Posterior vena cava (tissue), 2 donors: ENCODE measurements at regions of chr11 and their contacts with region 1.

Region 1: GRCh38 chr11:126310228-126310991 is 6.5 kb downstream of the DCPS start:
- DNase-seq: peak; percentile 88

Region 2: DNA sequence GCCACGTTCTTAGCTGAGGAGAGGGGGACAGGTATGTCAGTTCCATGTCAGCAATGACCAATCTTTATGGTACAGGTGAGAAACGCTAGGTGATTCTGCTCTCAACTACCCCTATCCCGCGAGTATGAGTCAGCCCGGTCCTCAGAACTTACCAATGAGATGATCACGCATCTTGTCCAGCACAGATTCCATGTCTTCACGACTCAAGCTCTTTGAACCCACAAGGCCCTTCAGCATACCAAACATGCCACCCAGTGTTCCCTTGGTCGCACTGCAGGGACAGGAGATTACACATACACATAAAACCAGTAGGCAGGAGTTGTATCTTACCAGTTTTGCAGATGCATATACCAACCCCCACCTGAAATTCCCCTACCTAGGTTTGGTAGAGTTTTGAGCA is 44.6 kb before region 1 on chr11:
- intact Hi-C with region 1: no loop called
- DNase-seq: no peak

Region 3: GRCh38 chr11:126280595-126280994 is 29.8 kb before region 1 on chr11:
- intact Hi-C with region 1: no loop called
- DNase-seq: no peak

Region 4: DNA sequence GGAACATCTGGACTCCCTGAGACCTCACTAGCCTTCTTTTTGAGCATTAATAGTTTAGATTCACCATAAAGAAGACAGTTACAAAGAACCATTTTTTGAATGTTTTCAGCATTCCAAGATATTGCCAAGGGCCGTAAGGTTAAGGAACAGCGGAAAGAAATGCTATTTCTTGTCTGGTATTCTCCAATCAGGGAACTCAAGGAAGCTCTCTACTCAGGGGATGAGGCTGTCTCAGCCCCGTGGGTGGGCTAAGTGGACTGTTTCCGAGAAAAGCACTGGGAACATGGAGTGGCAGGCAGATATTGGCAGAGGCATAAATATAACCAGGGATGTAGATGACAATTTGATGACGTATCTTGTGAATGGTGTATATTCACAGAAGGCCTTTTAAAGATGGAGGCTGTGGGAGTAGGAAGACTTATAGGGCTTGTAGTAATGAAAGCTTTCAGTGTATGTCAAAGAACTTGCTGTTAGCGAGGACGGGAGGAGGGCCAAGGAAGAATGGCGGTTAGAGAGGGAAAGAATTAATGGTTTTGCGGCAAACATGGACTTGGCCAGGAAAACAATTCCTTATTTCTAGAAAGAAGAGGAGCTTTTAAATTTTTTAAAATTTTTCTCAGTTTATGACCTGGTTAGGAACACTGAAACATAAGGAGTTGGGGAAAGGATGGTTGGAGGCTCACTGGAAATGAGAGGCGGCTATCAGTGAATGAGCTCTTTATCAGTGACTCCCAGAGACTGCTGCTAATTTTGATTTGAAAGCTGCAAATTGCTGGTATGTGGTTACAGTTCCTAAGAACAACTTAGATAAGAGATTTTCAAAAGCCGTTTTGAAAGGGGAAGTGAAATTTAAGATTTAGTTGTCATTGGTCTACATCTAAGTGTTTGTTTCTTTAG is 109.6 kb after region 1 on chr11:
- intact Hi-C with region 1: loop called in 1 of 2 experiments (anchors 5 kb)
- DNase-seq: no peak

Region 5: GRCh38 chr11:126480410-126481302 is 170.2 kb after region 1 on chr11:
- intact Hi-C with region 1: loop called (anchors 2 kb)
- DNase-seq: peak; percentile 93

Region 6: DNA sequence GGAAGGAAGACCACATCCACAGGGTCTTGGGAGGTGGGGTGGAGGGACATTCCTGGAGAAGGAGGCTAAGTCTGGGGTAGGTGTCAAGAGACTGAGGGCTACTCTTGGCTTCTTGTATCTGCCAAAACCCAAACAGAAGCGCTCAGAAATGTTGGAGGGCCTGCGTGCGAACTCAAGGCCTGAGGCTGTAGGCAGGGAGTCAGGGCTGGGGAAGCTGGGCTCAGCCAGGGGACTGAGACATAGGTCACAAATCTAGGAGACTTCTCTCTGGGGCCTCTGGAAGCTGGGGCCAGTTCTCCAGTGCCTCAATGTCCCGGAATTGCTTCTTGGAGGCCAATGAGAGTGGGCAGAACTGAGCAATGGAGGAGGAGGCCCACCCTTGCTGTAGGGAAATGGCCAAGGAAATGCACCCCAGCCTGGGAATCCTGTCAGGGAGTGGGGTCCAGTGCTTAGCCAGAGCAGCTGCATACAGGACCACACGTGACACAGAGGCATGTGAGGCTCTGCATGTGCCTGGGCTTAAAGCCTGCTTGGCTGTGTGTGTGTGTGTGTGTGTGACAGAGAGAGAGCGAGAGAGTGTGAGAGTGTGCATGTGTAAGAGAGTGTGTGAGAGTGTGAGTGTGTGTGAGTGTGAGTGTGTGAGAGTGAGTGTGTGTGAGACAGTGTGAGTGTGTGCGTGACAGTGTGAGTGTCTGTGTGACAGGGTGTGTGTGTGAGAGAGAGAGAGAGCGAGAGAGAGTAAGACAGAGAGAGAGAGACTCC is 186.3 kb after region 1 on chr11:
- intact Hi-C with region 1: no loop called
- DNase-seq: peak; percentile 54